Posterior cingulate gyrus (tissue), 11 donors: ENCODE measurements at regions of chr12 and their contacts with region 1.

Region 1: DNA sequence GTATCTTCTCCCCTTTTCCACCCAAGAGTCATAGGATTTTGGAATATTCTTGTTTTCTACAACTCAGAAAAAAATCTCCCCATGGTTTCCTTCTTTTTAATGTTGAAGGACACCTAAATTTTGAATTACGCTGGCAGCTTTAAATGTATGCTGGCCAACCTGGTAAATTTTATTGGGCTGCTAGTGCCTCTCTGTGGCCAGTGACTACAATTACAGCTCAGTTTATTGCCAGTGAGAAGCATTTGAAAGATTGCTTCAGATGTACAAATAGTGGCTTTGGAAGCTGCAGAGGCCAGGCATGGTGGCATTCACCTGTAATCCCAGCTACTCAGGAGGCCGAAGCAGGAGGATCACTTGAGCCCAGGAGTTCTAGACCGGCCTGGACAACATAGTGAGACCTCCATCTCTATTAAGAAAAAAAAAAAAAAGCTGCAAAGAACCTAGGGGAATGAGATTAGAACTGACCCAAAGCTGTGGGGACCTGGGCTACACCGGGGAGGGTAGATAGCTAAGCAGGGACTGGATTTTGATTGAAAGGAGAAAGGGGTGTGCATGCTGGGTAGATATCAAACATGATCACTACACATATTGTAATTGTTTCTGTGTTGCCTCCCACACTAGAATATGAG is 7.6 kb upstream of the RAB21 start:
- DNase-seq: peak in 4 of 10 donors; percentile 28 to 84 (median 38)

Region 2: DNA sequence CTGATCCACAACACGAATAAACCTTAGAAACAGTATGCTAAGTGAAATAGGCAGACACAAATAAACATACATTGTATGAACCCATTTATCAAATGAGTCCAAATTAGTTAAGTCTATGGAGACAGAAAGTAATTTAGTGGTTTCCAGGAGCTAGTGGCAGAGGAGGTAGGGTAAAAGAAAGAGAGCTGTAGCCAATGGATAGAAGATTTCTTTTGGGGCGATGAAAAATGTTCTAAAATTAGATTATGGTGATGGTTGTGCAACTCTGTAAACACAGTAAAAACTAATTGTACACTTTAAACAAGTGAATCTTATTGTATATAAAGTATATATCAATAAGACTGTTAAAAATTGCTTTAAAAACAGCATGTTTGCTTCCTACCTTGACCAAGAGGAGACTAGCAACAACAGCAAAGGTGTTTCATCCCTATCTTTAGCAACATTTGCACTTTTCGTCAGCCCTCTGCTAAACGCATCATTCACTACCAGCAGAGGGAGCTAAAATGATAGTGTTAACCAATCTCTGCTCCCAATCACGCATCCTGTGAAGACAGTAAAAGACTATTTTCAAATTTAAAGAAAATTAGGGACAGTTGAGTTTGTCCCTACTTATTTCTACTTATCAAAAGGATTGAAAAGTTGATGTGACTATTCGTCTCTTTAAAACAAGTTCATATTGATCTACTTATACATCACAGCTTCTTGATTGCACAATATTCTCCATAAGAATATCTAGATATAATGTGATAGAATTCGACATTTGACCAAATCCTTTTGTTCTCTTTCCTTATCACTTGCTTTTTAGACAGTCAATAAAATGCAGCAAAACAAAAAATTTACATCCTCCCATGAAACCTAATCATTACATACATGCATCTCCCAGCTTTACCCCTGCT is 331.5 kb before region 1 on chr12:
- intact Hi-C with region 1: loop called (anchors 2 kb)
- DNase-seq: peak in 1 of 10 donors; percentile 21

Region 3: DNA sequence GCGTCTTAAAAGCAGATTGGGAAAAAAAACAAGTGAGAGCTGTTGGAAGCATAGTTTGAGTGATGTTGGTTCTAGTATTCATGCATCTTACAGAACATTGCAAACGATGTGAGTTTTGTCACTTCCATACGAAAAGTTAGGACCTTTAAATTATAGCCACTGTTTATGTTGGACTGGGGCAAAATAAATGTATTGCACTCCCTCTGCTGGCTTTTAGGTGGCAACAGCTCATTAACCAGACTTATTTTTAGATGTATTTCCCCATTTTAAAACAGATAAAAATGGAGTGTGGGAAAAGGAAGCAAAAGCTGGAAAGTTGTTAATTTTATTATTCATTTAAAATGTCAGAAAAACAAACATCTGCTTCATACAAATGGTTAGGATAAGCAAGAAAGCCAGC is 195.6 kb before region 1 on chr12:
- intact Hi-C with region 1: loop called (anchors 1 kb)
- DNase-seq: no peak

Region 4: GRCh38 chr12:71663561-71664294 is 83.4 kb before region 1 on chr12 and contains the start of gene ZFC3H1:
- intact Hi-C with region 1: loop called (anchors 5 kb)
- DNase-seq: peak; percentile 94 to 99 (median 96)